ENCODE measurements at regions of chr5 and their contacts with region 1.

Region 1: DNA sequence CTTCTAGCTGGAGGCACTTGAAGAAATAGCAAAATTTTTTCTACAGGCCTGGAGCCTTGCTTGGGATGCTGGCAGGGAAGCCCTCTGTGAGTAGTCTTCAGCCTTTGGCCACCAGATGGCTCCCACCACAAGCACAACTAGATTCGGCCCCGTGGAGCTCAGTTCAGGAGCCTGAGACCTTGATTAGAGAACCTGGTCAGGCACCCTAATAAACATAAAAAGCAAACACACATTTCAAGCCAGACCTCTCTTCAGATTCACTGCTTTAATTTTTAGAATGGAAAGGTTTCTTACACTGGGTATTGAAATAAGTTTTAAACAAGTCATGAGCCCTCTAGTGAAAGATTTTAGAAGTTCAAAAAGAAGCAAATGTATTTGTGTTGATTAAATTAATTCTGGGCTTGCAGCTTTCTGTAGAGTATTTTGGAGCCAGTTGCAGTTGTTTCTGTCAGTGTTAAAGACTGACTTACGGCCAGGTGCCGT is 41.4 kb downstream of the GLRX start:
- DNase-seq: peak; percentile 19
- H3K4me3 ChIP-seq: peak overlapping the region in 2 of 4 donors; percentile 1 to 25
- H3K27ac ChIP-seq: peak overlapping the region; percentile 37 to 71 (median 58)
- H3K4me1 ChIP-seq: peaks cover 4 to 23% (median 8%) of the 10 kb centered on the region in 3 donors
- H3K27me3 ChIP-seq: no peaks in the 10 kb centered on the region
- CTCF ChIP-seq: peak; percentile 74 to 95 (median 88)
- POLR2A ChIP-seq: no peak

Region 2: GRCh38 chr5:95664204-95664786 is 116.8 kb before region 1 on chr5:
- intact Hi-C with region 1: loop called (anchors 10 kb)
- DNase-seq: no peak
- H3K4me3 ChIP-seq: no peak overlapping the region
- H3K27ac ChIP-seq: peak overlapping the region in 2 of 4 donors; percentile 1 to 45
- H3K4me1 ChIP-seq: peaks cover 0 to 16% (median 3%) of the 10 kb centered on the region in 3 donors
- H3K27me3 ChIP-seq: no peaks in the 10 kb centered on the region
- CTCF ChIP-seq: peak; percentile 49 to 85 (median 77)
- POLR2A ChIP-seq: no peak

Region 3: GRCh38 chr5:95846554-95847260 is 65.6 kb after region 1 on chr5:
- intact Hi-C with region 1: loop called (anchors 5 kb)
- DNase-seq: no peak
- H3K4me3 ChIP-seq: no peak overlapping the region
- H3K27ac ChIP-seq: peak overlapping the region in 1 of 4 donors; percentile 16
- H3K4me1 ChIP-seq: peaks cover 0 to 24% (median 13%) of the 10 kb centered on the region in 3 donors
- H3K27me3 ChIP-seq: no peaks in the 10 kb centered on the region
- CTCF ChIP-seq: peak; percentile 63 to 96 (median 96)
- POLR2A ChIP-seq: no peak

Measured in esophagus squamous epithelium (tissue), 5 donors.